ENCODE measurements at regions of chr18 and their contacts with region 1.

Region 1: GRCh38 chr18:46481048-46481846 is 175.8 kb downstream of the LOXHD1 start:
- DNase-seq: no peak
- H3K4me3 ChIP-seq: no peak overlapping the region
- H3K27ac ChIP-seq: no peak overlapping the region
- H3K4me1 ChIP-seq: peaks cover 0 to 13% (median 13%) of the 10 kb centered on the region in 4 donors
- H3K27me3 ChIP-seq: no peaks in the 10 kb centered on the region
- CTCF ChIP-seq: peak; percentile 63 to 80 (median 72)
- EP300 ChIP-seq: no peak
- POLR2A ChIP-seq: no peak

Region 2: DNA sequence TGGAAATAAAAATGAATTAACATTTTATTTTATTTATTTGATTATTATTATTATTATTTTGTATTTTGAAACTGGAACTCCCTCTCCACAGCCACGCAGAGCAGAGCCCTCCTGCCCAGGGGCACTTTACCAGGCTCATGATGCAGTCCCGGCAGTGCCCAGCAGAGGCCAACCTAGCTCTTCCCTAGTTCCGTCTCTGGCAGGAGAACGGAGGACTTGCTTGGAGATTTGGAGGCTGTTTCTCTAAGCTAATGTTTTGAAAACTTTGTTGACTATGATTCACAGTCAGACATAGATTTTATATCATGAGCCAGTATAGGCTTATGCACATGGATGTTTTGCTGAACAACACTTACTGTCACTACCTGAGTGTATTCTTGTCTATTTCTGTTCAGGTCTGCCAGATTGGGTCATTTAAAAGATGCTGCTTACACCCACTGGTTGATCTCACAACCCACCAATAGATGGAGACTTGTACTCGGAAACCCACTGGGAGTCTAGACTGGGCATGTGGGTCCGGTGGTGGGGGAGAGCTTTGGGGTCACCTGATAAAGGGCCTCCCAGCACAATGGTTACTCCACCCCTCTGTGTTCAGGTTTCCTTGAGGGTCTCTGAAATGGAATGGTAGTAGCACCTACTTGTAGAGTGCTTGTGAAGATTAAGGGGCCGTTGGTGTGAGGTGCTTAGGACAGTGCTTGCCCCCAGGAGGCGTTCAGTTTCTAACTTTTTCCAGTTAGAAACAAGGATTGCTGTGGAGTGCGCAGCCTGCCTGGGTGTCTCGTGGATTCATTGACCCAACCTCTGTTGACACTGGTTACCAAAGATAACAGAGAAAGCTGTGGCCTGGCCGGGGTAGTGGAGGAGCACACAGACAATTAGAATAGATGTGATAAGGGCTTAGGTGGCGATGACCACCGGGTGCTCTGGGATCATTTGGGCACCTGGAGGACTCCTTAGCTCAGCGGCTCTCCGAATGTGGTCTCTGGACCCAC is 199.8 kb before region 1 on chr18:
- intact Hi-C with region 1: loop called (anchors 2 kb)
- DNase-seq: no peak
- H3K4me3 ChIP-seq: no peak overlapping the region
- H3K27ac ChIP-seq: no peak overlapping the region
- H3K4me1 ChIP-seq: peaks cover 6 to 9% (median 7%) of the 10 kb centered on the region in 4 donors
- H3K27me3 ChIP-seq: no peaks in the 10 kb centered on the region
- CTCF ChIP-seq: peak; percentile 84 to 91 (median 88)
- EP300 ChIP-seq: no peak
- POLR2A ChIP-seq: no peak

Measured in esophagus muscularis mucosa (tissue), 4 donors.